GM10248 (cell line): ENCODE measurements at regions of chr17 and their contacts with region 1.

Region 1: GRCh38 chr17:67594115-67594880 is 123.4 kb upstream of the NOL11 start:
- DNase-seq: peak; percentile 48
- CTCF ChIP-seq: no peak

Region 2: GRCh38 chr17:67575325-67575724 is 19.0 kb before region 1 on chr17:
- CTCF ChIA-PET with region 1: interaction called, 20 read pairs
- POLR2A ChIA-PET with region 1: interaction called, 3 read pairs
- DNase-seq: peak; percentile 51
- CTCF ChIP-seq: peak; percentile 54

Region 3: GRCh38 chr17:67759355-67760171 is 165.3 kb after region 1 on chr17:
- CTCF ChIA-PET with region 1: no interaction called
- POLR2A ChIA-PET with region 1: no interaction called
- DNase-seq: no peak
- CTCF ChIP-seq: no peak